A673 (cell line): ENCODE measurements at regions of chr2 and their contacts with region 1.

Region 1: DNA sequence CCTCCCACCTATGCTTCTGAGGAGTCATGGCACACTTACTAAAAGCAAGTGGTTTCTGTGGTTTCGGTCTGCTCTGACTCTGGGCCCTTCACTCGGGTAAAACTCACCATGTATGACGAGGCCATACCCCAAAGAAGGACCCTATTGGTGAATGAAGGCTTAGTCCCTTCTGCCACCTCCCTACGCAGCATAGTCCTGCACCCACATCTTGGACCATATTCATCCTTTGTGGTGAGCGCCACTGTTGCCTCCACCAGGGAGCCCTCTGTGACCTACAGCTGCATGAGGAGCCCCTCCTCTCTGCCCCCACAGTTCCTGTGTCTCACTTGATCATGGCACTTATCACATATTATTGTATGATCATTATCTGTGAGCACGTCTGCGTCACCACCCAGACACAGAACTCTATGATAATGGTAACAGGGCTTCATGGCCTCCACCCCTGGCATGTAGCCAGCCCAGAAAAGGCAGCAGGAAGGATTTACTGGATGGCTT is 113.3 kb downstream of the TFCP2L1 start:
- DNase-seq: no peak
- H3K4me3 ChIP-seq: no peak overlapping the region
- H3K27ac ChIP-seq: no peak overlapping the region
- H3K4me1 ChIP-seq: no peaks in the 10 kb centered on the region
- H3K27me3 ChIP-seq: no peaks in the 10 kb centered on the region
- CTCF ChIP-seq: no peak

Region 2: DNA sequence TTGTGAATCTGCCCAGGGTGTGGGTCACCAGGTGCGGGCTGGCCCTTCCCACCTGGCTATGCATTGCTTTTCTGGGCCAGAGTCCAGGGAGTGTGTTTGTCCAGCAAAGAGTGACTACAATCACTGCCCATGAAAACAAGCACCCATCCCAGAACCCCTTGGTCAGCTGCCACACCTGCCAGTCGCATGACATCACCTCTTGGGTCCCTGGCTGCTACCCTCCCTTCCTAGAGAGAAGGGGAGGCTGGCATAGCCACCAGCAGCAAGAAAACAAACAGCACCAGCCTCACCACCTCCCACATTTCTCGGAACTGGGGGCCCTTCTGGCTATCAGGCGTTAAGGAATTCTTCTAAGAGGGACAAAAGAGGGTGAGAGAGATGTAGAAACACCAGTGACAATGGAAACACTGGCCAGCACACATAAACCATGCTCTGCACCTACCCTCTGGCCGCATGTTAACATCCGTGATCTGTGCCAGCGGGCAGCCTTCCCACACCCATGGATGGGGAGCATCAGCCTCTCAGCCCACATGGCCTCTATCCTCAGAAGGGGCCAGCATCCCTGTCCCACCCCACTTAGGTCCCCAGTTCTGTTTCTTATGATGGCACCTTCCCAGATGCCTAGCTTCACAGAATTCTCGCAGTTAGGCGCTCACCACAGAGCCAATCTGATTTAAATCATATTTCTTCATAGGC is 545.7 kb before region 1 on chr2:
- CTCF ChIA-PET with region 1: no interaction called
- POLR2A ChIA-PET with region 1: no interaction called
- intact Hi-C with region 1: no loop called
- DNase-seq: no peak
- H3K4me3 ChIP-seq: no peak overlapping the region
- H3K27ac ChIP-seq: no peak overlapping the region
- H3K4me1 ChIP-seq: no peaks in the 10 kb centered on the region
- H3K27me3 ChIP-seq: no peaks in the 10 kb centered on the region
- CTCF ChIP-seq: no peak

Region 3: GRCh38 chr2:121147766-121148165 is 23.9 kb before region 1 on chr2:
- CTCF ChIA-PET with region 1: no interaction called
- POLR2A ChIA-PET with region 1: interaction called, 16 read pairs
- intact Hi-C with region 1: no loop called
- DNase-seq: no peak
- H3K4me3 ChIP-seq: no peak overlapping the region
- H3K27ac ChIP-seq: no peak overlapping the region
- H3K4me1 ChIP-seq: no peaks in the 10 kb centered on the region
- H3K27me3 ChIP-seq: no peaks in the 10 kb centered on the region
- CTCF ChIP-seq: no peak